Natural killer cell (primary cell): ENCODE measurements at regions of chr6 and their contacts with region 1.

Region 1: GRCh38 chr6:36099872-36100483 is 30.3 kb upstream of the MAPK13 start:
- DNase-seq: peak in 1 of 2 donors; percentile 81
- ATAC-seq: peak; percentile 80 to 89 (median 87)
- H3K4me3 ChIP-seq: no peak overlapping the region
- H3K4me3 Mint-ChIP-seq: peak overlapping the region; percentile 84
- H3K27ac ChIP-seq: peak overlapping the region; percentile 78
- H3K27ac Mint-ChIP-seq: peak overlapping the region; percentile 92 to 96
- H3K4me1 ChIP-seq: peaks cover 46% of the 10 kb centered on the region
- H3K4me1 Mint-ChIP-seq: peaks cover 71 to 72% of the 10 kb centered on the region in 2 donors
- H3K27me3 ChIP-seq: no peaks in the 10 kb centered on the region
- H3K27me3 Mint-ChIP-seq: no peaks in the 10 kb centered on the region
- CTCF ChIP-seq: no peak

Region 2: GRCh38 chr6:36114798-36115408 is 14.9 kb after region 1 on chr6:
- intact Hi-C with region 1: loop called (anchors 1 kb)
- DNase-seq: peak in 1 of 2 donors; percentile 67
- ATAC-seq: peak; percentile 26 to 48 (median 37)
- H3K4me3 ChIP-seq: no peak overlapping the region
- H3K4me3 Mint-ChIP-seq: peak overlapping the region; percentile 81
- H3K27ac ChIP-seq: peak overlapping the region; percentile 88
- H3K27ac Mint-ChIP-seq: peak overlapping the region; percentile 97 to 100
- H3K4me1 ChIP-seq: peaks cover 62% of the 10 kb centered on the region
- H3K4me1 Mint-ChIP-seq: peaks cover 64 to 68% of the 10 kb centered on the region in 2 donors
- H3K27me3 ChIP-seq: no peaks in the 10 kb centered on the region
- H3K27me3 Mint-ChIP-seq: no peaks in the 10 kb centered on the region
- CTCF ChIP-seq: no peak